ENCODE measurements at regions of chr10 and their contacts with region 1.

Region 1: GRCh38 chr10:26931223-26931622 is 70.5 kb upstream of the ABI1 start:
- DNase-seq: no peak
- H3K4me3 ChIP-seq: no peak overlapping the region
- H3K27ac ChIP-seq: no peak overlapping the region
- H3K4me1 ChIP-seq: no peaks in the 10 kb centered on the region
- H3K27me3 ChIP-seq: 0 out of 2 replicates have a peak, but pooled peaks cover 2% of the 10 kb centered on the region
- CTCF ChIP-seq: no peak

Region 2: DNA sequence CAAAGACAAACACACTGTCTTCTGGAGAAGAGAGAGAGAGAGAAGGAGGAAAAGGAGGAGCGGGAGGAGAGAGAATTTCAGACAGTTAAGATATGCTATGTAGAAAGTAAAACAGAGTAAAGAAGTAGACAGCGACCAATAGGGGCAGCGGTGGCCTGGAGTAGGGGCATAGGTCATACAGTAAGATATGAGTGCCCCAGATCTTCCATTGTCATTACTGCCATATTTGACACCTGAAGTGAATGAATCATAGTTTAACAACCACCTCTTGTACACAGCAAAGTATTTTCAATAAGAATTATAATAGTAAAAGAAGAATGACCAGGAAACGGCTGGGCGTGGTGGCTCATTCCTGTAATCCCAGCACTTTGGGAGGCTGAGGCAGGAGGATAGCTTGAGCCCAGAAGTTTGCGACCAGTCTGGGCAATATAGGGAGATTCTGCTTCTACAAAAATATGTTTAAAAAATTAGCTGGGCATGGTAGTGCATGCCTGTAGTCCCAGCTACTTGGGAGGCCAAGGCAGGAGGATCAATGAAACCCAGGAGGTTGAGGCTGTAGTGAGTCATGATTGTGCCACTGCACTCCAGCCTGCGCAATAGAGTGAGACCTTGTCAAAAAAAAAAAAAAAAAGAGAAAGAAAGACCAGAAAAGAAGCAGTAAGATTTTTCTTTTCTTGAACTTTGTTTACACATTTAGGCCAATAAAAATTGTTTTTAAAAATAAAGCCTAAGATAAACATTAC is 1833.4 kb before region 1 on chr10:
- CTCF ChIA-PET with region 1: no interaction called
- POLR2A ChIA-PET with region 1: no interaction called
- intact Hi-C with region 1: no loop called
- DNase-seq: no peak
- H3K4me3 ChIP-seq: no peak overlapping the region
- H3K27ac ChIP-seq: no peak overlapping the region
- H3K4me1 ChIP-seq: no peaks in the 10 kb centered on the region
- H3K27me3 ChIP-seq: no peaks in the 10 kb centered on the region
- CTCF ChIP-seq: no peak

Region 3: GRCh38 chr10:27399871-27400270 is 468.6 kb after region 1 on chr10:
- CTCF ChIA-PET with region 1: no interaction called
- POLR2A ChIA-PET with region 1: interaction called, 17 read pairs
- intact Hi-C with region 1: no loop called
- DNase-seq: no peak
- H3K4me3 ChIP-seq: no peak overlapping the region
- H3K27ac ChIP-seq: no peak overlapping the region
- H3K4me1 ChIP-seq: no peaks in the 10 kb centered on the region
- H3K27me3 ChIP-seq: peaks cover 6% of the 10 kb centered on the region
- CTCF ChIP-seq: no peak